Endothelial cell of umbilical vein (primary cell): ENCODE measurements at regions of chr6 and their contacts with region 1.

Region 1: DNA sequence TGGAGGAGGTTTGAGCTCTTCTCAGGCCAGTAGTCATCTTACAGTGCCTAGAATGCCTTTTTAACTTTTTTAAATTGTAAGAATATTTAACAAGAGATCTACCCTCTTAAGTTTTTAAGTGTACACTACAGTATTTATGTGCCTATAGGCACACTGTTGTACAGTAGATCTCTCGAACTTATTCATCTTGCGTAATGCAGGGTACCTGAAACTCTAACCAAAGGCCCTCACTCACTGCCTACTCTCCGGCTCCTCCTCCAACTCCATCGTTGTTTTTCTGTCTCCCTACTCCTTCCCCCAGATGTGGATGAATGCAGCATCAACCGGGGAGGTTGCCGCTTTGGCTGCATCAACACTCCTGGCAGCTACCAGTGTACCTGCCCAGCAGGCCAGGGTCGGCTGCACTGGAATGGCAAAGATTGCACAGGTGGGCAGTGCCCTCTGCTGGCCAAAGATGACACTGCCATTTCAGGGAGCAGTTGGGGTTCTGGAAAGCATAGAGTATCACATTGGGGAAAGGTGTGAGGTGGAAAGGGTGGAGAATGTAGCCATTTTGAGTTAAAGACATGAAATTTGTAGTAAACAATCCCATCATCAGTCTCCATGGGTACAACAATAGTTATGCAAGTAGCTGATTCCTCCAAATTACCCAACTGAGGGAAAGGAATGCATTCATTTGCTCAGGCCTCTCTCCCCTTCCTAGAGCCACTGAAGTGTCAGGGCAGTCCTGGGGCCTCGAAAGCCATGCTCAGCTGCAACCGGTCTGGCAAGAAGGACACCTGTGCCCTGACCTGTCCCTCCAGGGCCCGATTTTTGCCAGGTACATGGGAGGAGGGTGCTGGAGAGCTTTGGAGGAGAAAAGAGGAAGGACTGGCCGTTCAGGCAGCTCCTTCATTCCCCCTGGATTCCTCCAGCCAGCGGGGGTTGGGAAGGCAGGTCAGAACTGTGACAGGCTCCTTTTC is 18.4 kb upstream of the ZNF76 start:
- DNase-seq: peak; percentile 65
- H3K4me3 ChIP-seq: no peak overlapping the region
- H3K27ac ChIP-seq: no peak overlapping the region
- H3K4me1 ChIP-seq: peaks cover 20% of the 10 kb centered on the region
- H3K27me3 ChIP-seq: no peaks in the 10 kb centered on the region
- CTCF ChIP-seq: peak; percentile 86 to 94
- POLR2A ChIP-seq: no peak

Region 2: GRCh38 chr6:35128496-35128895 is 112.6 kb before region 1 on chr6:
- CTCF ChIA-PET with region 1: interaction called, 13 read pairs
- POLR2A ChIA-PET with region 1: no interaction called
- dilution Hi-C with region 1: no loop called
- intact Hi-C with region 1: no loop called
- DNase-seq: no peak
- H3K4me3 ChIP-seq: no peak overlapping the region
- H3K27ac ChIP-seq: no peak overlapping the region
- H3K4me1 ChIP-seq: no peaks in the 10 kb centered on the region
- H3K27me3 ChIP-seq: peaks cover 10 to 13% of the 10 kb centered on the region in 2 experiments
- CTCF ChIP-seq: no peak
- POLR2A ChIP-seq: no peak

Region 3: DNA sequence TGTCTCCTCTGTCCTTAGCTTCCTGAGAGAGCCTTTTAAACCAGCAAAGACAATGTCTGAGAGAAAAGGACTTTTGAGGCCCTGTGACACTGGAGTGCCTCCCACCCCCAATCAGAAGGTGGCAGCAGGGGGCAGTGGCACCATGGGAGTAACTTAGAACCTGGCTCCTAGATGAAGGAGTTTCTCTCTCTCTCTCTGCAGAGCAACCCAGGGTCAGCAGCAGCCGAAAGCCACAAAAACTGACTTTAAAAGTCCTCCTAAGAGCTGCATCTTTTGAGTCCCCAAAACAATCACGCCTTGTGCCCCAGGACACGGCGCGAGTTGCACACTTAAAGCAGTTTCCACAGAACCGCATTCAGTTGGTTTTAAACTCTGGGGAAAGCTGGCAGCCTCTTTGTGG is 94.7 kb before region 1 on chr6:
- CTCF ChIA-PET with region 1: interaction called, 181 read pairs
- POLR2A ChIA-PET with region 1: no interaction called
- dilution Hi-C with region 1: no loop called
- intact Hi-C with region 1: loop called (anchors 1 kb)
- DNase-seq: peak; percentile 47
- H3K4me3 ChIP-seq: no peak overlapping the region
- H3K27ac ChIP-seq: no peak overlapping the region
- H3K4me1 ChIP-seq: peaks cover 11% of the 10 kb centered on the region
- H3K27me3 ChIP-seq: no peaks in the 10 kb centered on the region
- CTCF ChIP-seq: peak; percentile 51 to 70
- POLR2A ChIP-seq: no peak

Region 4: GRCh38 chr6:35185971-35186370 is 55.1 kb before region 1 on chr6:
- CTCF ChIA-PET with region 1: no interaction called
- POLR2A ChIA-PET with region 1: no interaction called
- dilution Hi-C with region 1: no loop called
- intact Hi-C with region 1: no loop called
- DNase-seq: no peak
- H3K4me3 ChIP-seq: no peak overlapping the region
- H3K27ac ChIP-seq: no peak overlapping the region
- H3K4me1 ChIP-seq: peaks cover 9% of the 10 kb centered on the region
- H3K27me3 ChIP-seq: peaks cover 2 to 4% of the 10 kb centered on the region in 2 experiments
- CTCF ChIP-seq: no peak
- POLR2A ChIP-seq: no peak

Region 5: GRCh38 chr6:35202066-35202546 is 39.0 kb before region 1 on chr6:
- CTCF ChIA-PET with region 1: interaction called, 113 read pairs
- POLR2A ChIA-PET with region 1: no interaction called
- dilution Hi-C with region 1: no loop called
- intact Hi-C with region 1: loop called (anchors 2 kb)
- DNase-seq: no peak
- H3K4me3 ChIP-seq: no peak overlapping the region
- H3K27ac ChIP-seq: no peak overlapping the region
- H3K4me1 ChIP-seq: no peaks in the 10 kb centered on the region
- H3K27me3 ChIP-seq: peaks cover 17 to 20% of the 10 kb centered on the region in 2 experiments
- CTCF ChIP-seq: no peak
- POLR2A ChIP-seq: no peak

Region 6: GRCh38 chr6:35230950-35231349 is 10.2 kb before region 1 on chr6:
- CTCF ChIA-PET with region 1: interaction called, 48 read pairs
- POLR2A ChIA-PET with region 1: no interaction called
- dilution Hi-C with region 1: no loop called
- intact Hi-C with region 1: no loop called
- DNase-seq: no peak
- H3K4me3 ChIP-seq: no peak overlapping the region
- H3K27ac ChIP-seq: no peak overlapping the region
- H3K4me1 ChIP-seq: no peaks in the 10 kb centered on the region
- H3K27me3 ChIP-seq: no peaks in the 10 kb centered on the region
- CTCF ChIP-seq: no peak
- POLR2A ChIP-seq: no peak